B cell (primary cell): ENCODE measurements at regions of chr16 and their contacts with region 1.

Region 1: GRCh38 chr16:50806099-50807062 is 64.5 kb downstream of the CYLD start:
- DNase-seq: peak; percentile 92
- ATAC-seq: peak; percentile 93
- H3K4me3 ChIP-seq: peak overlapping the region in 4 of 5 experiments; percentile 19 to 53 (median 44)
- H3K4me3 Mint-ChIP-seq: peak overlapping the region; percentile 81
- H3K27ac ChIP-seq: no peak overlapping the region
- H3K27ac Mint-ChIP-seq: peak overlapping the region; percentile 79
- H3K4me1 ChIP-seq: peaks cover 11 to 15% of the 10 kb centered on the region in 2 donors
- H3K4me1 Mint-ChIP-seq: peaks cover 20% of the 10 kb centered on the region
- H3K27me3 ChIP-seq: no peaks in the 10 kb centered on the region
- H3K27me3 Mint-ChIP-seq: peaks cover 15% of the 10 kb centered on the region
- CTCF ChIP-seq: peak; percentile 96

Region 2: DNA sequence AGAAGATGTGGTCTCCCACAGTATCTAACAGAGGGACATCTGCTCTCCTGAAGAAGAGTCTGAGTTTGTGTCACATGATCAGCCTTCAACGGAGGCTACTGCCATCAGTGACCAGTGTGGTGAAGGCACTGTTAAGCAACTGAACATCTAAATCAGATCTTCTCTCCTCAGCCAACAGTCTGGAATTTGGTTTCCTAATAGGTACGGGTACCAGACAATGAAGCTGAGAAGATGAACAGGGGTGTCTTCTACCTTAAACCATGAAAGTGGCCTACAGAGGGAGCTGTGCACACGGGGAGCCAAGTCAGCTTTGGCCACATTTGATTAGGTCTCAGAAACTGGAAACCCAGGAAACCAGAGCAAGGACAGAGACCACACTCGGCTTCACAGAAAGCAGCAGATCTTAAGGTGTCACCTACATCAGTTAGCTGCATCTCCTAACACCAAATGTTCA is 479.4 kb before region 1 on chr16:
- CTCF ChIA-PET with region 1: interaction called, 14 read pairs
- POLR2A ChIA-PET with region 1: no interaction called
- intact Hi-C with region 1: no loop called
- DNase-seq: peak; percentile 50
- ATAC-seq: peak; percentile 85
- H3K4me3 ChIP-seq: no peak overlapping the region
- H3K4me3 Mint-ChIP-seq: peak overlapping the region; percentile 24
- H3K27ac ChIP-seq: peak overlapping the region; percentile 38 to 63
- H3K27ac Mint-ChIP-seq: peak overlapping the region; percentile 74
- H3K4me1 ChIP-seq: peaks cover 0 to 31% of the 10 kb centered on the region in 2 donors
- H3K4me1 Mint-ChIP-seq: peaks cover 51% of the 10 kb centered on the region
- H3K27me3 ChIP-seq: no peaks in the 10 kb centered on the region
- H3K27me3 Mint-ChIP-seq: no peaks in the 10 kb centered on the region
- CTCF ChIP-seq: peak; percentile 76

Region 3: DNA sequence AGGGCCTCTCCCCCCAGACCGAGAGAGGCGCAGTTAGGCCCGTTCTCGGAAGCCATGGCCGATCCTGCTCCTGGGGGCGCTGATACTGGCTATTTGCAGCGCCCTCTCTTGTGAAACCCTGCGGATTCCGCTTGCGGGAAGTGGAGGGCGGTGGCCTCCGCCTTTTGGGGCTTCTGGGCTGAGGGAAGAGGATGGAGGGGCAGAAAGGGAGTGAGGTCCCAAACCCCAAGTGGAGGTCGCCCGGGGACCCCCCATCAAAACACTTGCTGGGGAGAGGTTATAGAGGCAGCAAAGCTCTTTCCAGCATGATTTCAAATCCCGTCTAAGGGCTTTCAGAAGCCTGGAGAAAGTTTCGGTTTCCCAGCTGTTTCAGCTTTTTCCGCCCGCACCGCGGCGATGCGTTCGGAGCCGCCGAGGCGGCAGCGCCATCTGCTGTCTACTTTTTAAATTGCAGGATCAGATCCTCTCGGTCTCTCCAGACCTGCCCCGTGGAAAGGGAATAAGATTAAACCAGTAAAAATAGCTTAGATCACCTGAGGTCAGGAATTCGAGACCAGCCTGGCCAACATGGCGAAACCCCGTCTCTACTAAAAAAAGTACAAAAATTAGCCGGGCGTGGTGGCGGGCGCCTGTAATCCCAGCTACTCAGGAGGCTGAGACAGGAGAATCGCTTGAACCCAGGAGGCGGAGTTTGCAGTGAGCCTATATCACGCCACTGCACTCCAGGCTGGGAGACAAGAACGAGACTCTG is 141.1 kb before region 1 on chr16:
- CTCF ChIA-PET with region 1: interaction called, 83 read pairs
- POLR2A ChIA-PET with region 1: no interaction called
- intact Hi-C with region 1: loop called (anchors 1 kb)
- DNase-seq: peak; percentile 81
- ATAC-seq: peak; percentile 71
- H3K4me3 ChIP-seq: peak overlapping the region; percentile 43 to 59 (median 49)
- H3K4me3 Mint-ChIP-seq: peak overlapping the region; percentile 86
- H3K27ac ChIP-seq: peak overlapping the region in 1 of 2 donors; percentile 7
- H3K27ac Mint-ChIP-seq: peak overlapping the region; percentile 79
- H3K4me1 ChIP-seq: peaks cover 10 to 21% of the 10 kb centered on the region in 2 donors
- H3K4me1 Mint-ChIP-seq: peaks cover 25% of the 10 kb centered on the region
- H3K27me3 ChIP-seq: no peaks in the 10 kb centered on the region
- H3K27me3 Mint-ChIP-seq: no peaks in the 10 kb centered on the region
- CTCF ChIP-seq: peak; percentile 93

Region 4: DNA sequence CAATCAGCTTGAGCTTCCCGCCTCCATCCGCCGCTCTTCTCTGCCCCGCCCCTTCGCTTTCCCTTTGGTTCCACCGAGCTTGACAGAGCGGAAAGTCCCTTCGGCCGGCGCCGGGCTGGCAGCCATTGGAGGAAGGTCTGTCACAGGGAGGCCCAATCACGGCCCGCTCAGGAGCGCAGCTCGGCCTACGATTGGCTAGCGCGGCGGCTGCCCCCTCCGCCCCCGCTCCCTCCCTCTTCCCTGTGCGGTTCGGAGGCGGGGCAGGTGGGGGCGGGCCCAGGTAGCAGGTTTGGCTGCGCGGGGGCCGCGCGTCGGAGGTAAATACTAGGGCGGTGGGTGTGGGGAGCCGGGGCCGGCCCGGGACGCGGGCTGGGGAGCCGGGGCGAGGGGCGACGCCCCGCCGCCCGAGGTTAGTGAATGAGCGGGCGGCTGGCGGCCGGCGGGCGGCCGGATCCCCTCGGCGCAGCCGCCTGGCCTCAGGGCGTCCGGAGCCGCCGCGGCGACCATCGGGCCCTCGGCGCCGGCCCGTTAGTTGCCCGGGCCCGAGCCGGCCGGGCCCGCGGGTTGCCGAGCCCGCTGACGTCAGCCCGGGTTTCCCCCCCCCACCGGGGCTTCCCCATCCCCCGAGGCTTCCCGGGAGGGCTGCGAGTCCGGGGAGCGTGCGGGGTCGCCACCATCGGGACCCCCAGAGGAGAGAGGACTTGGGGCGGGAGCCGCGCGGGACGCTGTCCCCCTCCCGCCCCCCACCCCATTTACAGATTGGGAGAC is 64.4 kb before region 1 on chr16 and contains the start of gene CYLD:
- CTCF ChIA-PET with region 1: interaction called, 18 read pairs
- POLR2A ChIA-PET with region 1: no interaction called
- intact Hi-C with region 1: loop called (anchors 1 kb)
- DNase-seq: peak; percentile 100
- ATAC-seq: peak; percentile 86
- H3K4me3 ChIP-seq: peak within 1 kb of the TSS; percentile 75 to 96 (median 85)
- H3K4me3 Mint-ChIP-seq: peak within 1 kb of the TSS; percentile 91
- H3K27ac ChIP-seq: peak within 1 kb of the TSS; percentile 100
- H3K27ac Mint-ChIP-seq: peak within 1 kb of the TSS; percentile 97
- H3K4me1 ChIP-seq: peaks cover 34% of the 10 kb centered on the region in 2 donors
- H3K4me1 Mint-ChIP-seq: peaks cover 49% of the 10 kb centered on the region
- H3K27me3 ChIP-seq: no peaks in the 10 kb centered on the region
- H3K27me3 Mint-ChIP-seq: no peaks in the 10 kb centered on the region
- CTCF ChIP-seq: no peak
- total RNA-seq, gene CYLD: 160 and 166 TPM in 2 replicates

Region 5: DNA sequence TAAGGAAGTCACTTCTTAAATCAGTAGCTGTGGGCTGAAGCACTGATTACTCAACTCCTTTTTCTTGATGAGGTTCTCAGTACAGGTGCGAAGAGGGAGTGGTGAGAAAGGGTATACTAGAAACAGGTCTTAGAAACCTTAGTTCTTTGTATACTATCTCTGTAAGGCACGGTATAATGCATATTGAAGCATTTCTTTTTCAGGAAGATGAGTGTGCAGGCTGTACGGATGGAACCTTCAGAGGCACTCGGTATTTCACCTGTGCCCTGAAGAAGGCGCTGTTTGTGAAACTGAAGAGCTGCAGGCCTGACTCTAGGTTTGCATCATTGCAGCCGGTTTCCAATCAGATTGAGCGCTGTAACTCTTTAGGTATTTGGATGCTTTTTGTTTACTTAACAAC is 25.3 kb before region 1 on chr16:
- CTCF ChIA-PET with region 1: interaction called, 33 read pairs
- POLR2A ChIA-PET with region 1: no interaction called
- intact Hi-C with region 1: no loop called
- DNase-seq: no peak
- ATAC-seq: no peak
- H3K4me3 ChIP-seq: no peak overlapping the region
- H3K4me3 Mint-ChIP-seq: no peak overlapping the region
- H3K27ac ChIP-seq: no peak overlapping the region
- H3K27ac Mint-ChIP-seq: no peak overlapping the region
- H3K4me1 ChIP-seq: no peaks in the 10 kb centered on the region
- H3K4me1 Mint-ChIP-seq: no peaks in the 10 kb centered on the region
- H3K27me3 ChIP-seq: no peaks in the 10 kb centered on the region
- H3K27me3 Mint-ChIP-seq: no peaks in the 10 kb centered on the region
- CTCF ChIP-seq: peak; percentile 15